Sciatic nerve (tissue), 2 donors: ENCODE measurements at regions of chr15 and their contacts with region 1.

Region 1: GRCh38 chr15:79170256-79170664 is 79.7 kb upstream of the RASGRF1 start:
- DNase-seq: no peak
- ATAC-seq: peak; percentile 61

Region 2: GRCh38 chr15:79035111-79035601 is 135.1 kb before region 1 on chr15:
- intact Hi-C with region 1: loop called (anchors 10 kb)
- DNase-seq: no peak
- ATAC-seq: peak; percentile 13

Region 3: DNA sequence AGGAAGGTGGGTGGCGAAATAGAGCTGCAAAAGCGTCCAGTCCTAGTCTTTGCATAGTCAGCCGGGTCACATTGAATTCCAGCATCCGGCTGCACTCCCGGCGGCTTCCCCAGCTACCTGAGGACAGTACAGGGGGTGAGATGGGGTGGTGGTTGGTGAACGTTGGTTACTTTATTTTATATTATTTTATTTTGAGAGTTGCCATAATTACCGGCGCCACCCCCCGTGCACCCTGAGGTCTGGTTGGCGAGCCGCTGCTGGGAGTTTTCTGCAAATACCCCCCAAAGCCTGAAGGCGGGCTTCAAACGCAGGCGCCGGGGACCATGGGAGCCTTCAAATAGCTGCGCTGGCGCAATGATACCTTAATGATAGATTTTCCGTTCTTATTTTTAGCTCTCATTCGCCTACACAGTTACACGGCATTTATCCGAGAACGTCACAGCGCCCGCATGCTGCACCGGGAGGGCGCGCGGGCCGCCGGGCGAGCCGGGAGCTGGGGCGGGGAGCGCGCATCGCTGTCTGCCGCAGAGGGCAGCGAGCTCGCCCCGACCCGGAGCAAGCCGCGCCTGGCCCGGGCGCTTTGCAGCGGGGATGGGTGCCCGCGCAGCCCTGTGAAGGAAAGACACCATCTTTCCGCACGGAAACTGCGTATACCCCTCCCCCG is 78.9 kb before region 1 on chr15:
- intact Hi-C with region 1: loop called (anchors 2 kb)
- DNase-seq: no peak
- ATAC-seq: no peak

Region 4: GRCh38 chr15:79130535-79131130 is 39.6 kb before region 1 on chr15:
- intact Hi-C with region 1: no loop called
- DNase-seq: no peak
- ATAC-seq: no peak

Region 5: DNA sequence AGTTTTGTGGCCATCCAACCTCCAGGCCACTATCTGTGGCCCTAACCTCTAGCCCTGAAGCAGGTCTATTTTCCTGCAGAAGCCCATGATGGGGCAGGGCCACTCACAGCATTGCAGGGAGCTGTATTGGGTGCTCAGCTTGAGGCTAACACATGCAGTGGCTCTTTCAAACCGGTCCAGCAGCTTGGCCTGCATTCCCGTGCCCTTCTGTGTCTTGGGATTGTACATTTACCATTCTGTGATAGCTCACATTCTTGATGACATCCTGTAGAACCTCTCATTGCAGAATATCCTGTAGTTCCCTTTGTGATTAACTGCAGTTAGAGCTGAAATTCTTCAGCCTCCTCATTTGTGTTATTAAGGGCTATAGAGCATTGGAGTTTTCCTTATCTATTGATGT is 51.4 kb after region 1 on chr15:
- intact Hi-C with region 1: loop called (anchors 2 kb)
- DNase-seq: no peak
- ATAC-seq: no peak

Region 6: DNA sequence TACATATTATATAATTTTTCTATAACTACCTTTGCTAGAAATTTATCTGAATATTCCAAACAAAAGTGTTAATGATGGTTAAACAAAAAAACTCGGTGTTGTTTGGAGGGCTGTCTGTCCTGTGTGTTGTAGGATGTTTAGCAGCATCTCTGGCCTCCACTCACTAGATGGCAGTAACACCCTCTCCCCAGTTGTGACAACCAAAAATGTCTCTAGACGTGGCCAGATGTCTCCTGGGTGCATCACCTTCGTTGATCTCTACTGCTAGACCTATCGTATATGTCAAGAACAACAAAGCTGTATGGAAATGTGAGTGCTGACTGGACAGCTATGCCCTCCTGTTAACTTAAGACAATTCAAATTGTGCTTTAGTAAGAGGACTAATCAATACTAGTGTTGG is 126.3 kb after region 1 on chr15:
- intact Hi-C with region 1: no loop called
- DNase-seq: no peak
- ATAC-seq: no peak

Region 7: DNA sequence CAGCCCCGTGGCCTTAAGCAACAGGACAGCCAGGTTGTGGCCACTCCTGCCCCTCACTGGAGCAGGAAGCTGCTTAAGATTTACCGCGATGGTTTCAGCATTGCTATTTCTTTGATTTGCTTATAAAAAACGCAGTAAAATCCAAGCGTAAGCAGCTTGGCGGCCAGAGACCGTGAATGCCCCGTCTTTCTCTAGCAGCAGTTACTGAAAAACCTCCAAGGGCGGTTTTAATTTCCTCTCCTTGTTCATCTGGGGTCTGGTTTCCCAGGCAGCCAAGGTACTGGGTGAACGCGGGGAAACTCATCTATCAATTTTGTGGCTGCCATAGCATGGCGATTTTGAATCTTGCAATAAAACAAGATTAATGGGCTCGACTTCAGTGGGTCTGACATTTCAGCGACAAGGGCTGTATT is 392.1 kb after region 1 on chr15:
- intact Hi-C with region 1: no loop called
- DNase-seq: no peak
- ATAC-seq: no peak

Region 8: DNA sequence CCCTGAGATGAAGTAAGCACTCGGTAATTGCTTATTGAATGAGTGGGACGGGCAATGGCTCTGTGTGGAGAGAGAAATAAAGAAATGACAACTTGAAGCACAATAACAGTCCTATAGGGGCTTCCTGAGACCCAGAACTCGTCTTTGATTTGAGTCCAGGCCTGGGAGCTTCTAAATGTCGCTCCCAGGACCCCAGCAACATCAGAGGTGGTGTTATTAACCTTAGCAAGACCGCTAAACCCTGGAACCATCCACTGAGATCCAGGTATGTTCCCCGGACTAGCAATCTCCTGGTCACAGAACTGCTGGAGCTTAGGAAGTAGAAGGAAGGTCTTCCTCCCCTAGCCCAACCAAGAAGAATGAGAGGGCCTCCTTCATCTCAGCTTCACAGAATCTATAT is 421.9 kb after region 1 on chr15:
- intact Hi-C with region 1: no loop called
- DNase-seq: no peak
- ATAC-seq: no peak